AG04449 (cell line): ENCODE measurements at regions of chr14 and their contacts with region 1.

Region 1: GRCh38 chr14:67571272-67571850 is 28.7 kb downstream of the PIGH start:
- DNase-seq: no peak
- H3K4me3 ChIP-seq: no peak overlapping the region
- CTCF ChIP-seq: peak; percentile 92

Region 2: DNA sequence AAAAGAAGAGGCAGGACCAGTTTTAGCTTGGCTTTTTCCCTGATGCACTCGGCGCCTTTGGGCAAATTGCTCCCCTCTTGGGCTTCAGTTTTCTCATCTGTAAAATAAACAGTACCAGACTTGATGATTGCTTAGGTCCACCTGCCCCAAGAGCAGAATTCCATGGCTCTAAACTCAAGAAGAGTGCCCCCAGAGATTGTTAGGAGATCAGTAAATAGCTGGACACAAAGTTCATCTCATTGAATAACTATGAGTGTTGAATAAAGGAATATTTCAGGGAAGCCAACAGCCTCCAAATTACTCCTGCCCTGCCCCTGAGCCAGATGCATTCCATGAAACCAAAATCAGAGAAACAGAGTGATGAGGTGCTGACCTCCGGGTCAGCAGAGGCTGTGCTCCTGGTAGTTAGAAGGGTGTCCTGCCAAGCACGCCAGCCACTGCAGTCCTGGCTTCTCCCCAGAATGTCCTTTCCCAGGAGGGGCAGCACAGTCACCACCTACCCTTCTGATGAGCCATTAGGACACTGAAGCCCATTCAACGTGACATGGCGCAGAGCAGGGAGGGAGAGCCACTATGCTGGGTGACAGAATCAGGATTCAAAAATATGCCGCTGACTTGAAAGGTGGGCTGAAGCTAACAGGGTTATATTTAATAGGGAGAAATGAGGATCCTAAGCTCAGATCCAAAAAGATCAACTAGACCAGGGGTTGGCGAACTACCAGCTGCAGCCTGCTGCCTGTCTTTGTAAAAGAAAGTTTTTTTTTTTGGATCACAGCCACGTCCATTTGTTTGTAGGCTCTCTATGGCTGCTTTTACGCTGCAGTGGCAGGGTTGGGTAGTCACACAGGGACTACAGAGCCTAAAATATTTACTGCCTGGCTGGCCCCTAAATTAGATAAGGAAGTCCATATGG is 125.0 kb before region 1 on chr14:
- CTCF ChIA-PET with region 1: interaction called, 27 read pairs
- POLR2A ChIA-PET with region 1: no interaction called
- DNase-seq: no peak
- H3K4me3 ChIP-seq: no peak overlapping the region
- CTCF ChIP-seq: no peak

Region 3: GRCh38 chr14:67514650-67515385 is 56.5 kb before region 1 on chr14:
- CTCF ChIA-PET with region 1: interaction called, 12 read pairs
- POLR2A ChIA-PET with region 1: no interaction called
- DNase-seq: no peak
- H3K4me3 ChIP-seq: peak overlapping the region; percentile 67
- CTCF ChIP-seq: no peak

Region 4: DNA sequence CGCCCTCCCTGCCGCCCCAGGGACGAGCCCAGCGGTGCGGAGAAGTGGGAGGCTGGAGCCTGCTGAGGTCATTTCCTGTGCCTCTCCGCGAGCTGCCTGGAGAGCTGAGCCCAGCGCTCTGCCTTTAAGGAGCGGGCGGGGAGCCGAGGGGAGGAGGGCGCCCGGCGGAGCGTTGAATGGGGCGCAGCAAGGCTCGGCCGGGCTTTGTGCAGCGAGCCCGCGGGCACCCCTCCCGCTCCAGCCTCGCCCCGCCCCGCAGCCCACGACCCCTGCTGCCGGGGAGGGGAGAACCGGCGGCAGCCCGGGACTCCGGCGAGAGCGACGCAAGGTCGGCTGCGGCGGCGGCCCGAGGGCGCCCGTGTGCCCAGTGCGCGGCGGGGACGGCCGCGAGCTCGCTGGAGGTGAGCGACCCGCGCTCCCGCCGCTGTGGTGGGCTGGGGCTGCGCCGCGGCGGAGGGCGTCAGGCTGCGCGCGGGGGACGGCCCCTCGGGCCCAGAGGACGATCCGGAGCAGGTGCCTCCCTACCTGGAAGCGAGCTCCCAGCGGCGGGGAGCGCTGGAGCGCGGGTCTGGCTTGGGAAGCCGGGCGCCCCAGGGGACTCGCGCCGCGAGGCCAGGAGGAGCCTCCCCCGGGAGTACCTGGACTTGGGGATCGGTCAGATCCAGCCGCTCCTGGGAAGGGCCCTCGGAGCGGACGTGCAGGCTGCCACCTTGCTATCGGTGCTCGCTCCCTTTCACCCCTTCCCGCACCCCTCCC is 38.2 kb before region 1 on chr14 and contains the start of gene PLEKHH1:
- CTCF ChIA-PET with region 1: interaction called, 80 read pairs
- POLR2A ChIA-PET with region 1: no interaction called
- DNase-seq: no peak
- H3K4me3 ChIP-seq: peak within 1 kb of the TSS; percentile 54
- CTCF ChIP-seq: no peak

Region 5: DNA sequence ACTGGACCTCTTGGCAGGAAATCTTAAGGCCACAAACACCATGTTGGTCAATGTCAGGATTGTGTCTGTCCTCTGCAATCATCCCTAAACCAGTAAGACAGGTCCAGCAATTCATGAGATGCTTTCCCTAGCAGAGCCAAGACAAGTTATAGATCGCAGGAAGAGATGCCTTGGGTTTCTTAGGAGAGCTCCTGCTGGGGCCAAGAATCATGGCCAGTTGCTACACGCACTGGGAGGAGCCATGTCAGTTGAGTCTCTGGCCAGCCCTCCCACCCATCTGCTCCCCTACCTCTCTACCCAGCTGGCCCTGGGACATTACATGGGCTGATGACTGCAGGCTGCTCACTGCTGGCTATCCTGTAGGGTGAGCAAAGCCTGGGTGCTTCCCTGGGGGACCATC is 24.1 kb before region 1 on chr14:
- CTCF ChIA-PET with region 1: interaction called, 14 read pairs
- POLR2A ChIA-PET with region 1: no interaction called
- DNase-seq: no peak
- H3K4me3 ChIP-seq: no peak overlapping the region
- CTCF ChIP-seq: no peak

Region 6: DNA sequence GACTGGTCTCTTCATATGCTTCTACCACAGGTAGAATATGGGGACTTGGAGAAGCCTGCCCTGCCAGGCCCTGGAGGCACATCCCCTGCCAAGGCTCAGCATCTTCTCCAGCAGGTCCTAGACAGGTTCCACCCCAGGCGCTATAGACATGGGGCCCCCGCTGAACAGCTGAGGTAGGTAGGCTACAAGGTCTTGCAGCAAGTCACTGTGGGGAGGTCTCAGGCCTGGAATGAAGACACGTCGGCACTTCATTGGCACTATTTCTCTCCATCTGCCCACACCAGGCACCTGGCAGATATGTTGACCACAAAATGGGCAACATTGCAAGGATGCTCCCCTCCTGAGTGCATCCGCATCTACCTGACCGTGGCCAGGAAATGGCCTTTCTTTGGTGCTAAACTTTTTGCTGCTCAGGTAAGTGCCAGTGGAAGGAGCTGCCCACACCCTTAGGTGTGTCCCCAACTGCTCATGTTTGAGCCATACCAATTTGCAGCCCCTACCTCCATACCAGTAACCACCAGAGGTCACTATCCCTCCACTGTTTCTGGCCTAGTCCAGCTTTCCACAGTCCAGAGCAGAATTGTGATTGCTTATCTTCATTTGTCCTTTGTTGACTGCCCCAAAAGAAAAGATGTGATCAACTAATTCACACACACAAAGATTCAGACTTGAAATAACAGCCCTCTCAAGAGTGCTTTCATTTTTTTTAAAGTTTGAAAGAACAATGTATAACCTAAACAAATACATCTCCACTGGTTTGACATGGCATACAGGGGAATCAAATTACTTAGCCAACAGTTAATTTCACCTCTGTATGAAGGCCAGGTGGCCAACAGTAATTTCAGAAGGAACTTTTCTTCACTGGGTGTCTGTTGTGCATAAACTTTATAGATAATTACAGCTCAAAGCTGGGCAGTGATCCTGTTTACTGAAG is 12.6 kb after region 1 on chr14:
- CTCF ChIA-PET with region 1: interaction called, 230 read pairs
- POLR2A ChIA-PET with region 1: no interaction called
- DNase-seq: no peak
- H3K4me3 ChIP-seq: no peak overlapping the region
- CTCF ChIP-seq: peak; percentile 72

Region 7: DNA sequence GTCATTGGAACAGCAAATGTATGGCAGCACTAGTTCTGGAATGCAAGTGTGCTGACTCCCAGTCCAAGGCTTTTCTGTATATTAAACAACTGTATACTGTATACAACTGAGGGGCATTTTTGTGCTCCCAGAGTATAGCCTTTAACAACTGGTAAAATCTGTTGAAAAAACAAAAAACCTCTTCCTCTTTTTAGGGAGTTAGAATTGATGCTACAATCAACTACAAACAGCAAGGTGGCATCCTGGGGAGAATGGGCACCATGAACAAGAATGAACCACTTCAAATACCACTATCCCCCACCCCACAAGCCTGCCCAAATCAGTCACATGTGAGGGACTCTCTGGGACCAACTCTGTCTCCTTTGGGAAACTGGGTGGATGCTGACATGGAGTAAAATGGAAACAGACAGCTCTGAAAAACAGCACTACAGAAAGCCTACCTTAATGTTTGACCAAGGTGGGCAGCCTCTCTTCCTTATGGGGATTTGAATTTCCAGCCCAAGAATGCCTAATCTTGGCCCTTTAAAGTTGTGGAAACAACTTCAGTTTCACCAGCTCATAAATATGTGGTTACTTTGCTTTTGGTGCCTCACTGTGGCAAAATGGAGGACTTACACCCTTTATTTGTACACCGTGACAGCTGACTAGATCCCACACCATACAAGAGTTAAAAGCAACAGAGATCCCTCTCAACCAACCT is 95.5 kb after region 1 on chr14:
- CTCF ChIA-PET with region 1: interaction called, 269 read pairs
- POLR2A ChIA-PET with region 1: no interaction called
- DNase-seq: no peak
- H3K4me3 ChIP-seq: no peak overlapping the region
- CTCF ChIP-seq: peak; percentile 61

Region 8: GRCh38 chr14:67806246-67806645 is 234.9 kb after region 1 on chr14:
- CTCF ChIA-PET with region 1: no interaction called
- POLR2A ChIA-PET with region 1: no interaction called
- DNase-seq: peak; percentile 37
- H3K4me3 ChIP-seq: no peak overlapping the region
- CTCF ChIP-seq: no peak